ENCODE measurements at regions of chr14 and their contacts with region 1.

Region 1: GRCh38 chr14:93857500-93858283 is 69.4 kb upstream of the PRIMA1 start:
- DNase-seq: no peak

Region 2: GRCh38 chr14:93629643-93630042 is 228.0 kb before region 1 on chr14:
- intact Hi-C with region 1: no loop called
- DNase-seq: no peak

Region 3: GRCh38 chr14:93830736-93831461 is 26.8 kb before region 1 on chr14:
- intact Hi-C with region 1: loop called in 1 of 2 experiments (anchors 1 kb)
- DNase-seq: no peak

Measured in posterior vena cava (tissue), 2 donors.